Activated CD8-positive, alpha-beta T cell treated with anti-CD3 and anti-CD28 coated beads, Interleukin-2, amount 10 ng/mL, durations not matched to agents 7 days and 5 days (primary cell): ENCODE measurements at regions of chr19 and their contacts with region 1.

Region 1: GRCh38 chr19:18328340-18329034 is 5.6 kb upstream of the LSM4 start:
- DNase-seq: peak; percentile 95
- ATAC-seq: peak; percentile 100
- H3K4me3 Mint-ChIP-seq: peak overlapping the region; percentile 71
- H3K27ac Mint-ChIP-seq: peak overlapping the region; percentile 2
- H3K4me1 Mint-ChIP-seq: peaks cover 22% of the 10 kb centered on the region
- H3K27me3 Mint-ChIP-seq: no peaks in the 10 kb centered on the region

Region 2: DNA sequence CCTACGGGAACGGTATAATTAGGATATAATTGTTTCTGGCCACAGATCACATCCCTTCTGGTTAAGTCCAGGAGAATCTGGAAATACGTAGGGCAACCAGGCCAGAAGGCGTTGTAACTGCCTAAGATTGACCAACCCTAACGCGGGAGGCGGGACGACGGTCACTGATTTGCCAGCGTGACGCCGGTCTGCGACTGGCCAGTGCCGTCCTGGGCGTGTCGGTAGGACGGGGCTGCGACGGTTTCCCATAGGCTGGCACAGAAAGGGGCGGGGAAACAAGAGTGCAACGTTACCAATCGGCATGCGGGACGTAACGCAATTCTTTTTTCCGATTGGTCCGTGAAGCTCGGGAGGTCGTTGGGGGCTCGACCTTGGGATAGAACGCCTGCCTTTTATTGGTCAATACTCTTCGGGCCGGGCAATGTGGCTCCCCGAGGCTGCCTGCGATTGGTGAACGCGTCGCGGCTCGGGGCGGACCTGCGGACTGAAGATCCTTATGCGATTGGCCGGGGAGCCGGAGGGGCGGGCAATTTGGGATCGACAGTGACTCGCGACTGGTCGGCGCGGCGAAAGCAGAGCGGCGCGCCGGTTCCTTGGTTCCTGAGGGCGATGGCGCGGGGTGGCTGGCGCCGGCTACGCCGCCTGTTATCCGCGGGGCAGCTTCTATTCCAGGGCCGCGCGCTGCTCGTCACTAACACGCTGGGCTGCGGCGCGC is 135.7 kb before region 1 on chr19 and contains the start of gene MPV17L2:
- CTCF ChIA-PET with region 1: interaction called, 20 read pairs
- POLR2A ChIA-PET with region 1: no interaction called
- DNase-seq: peak; percentile 100
- ATAC-seq: peak; percentile 95
- H3K4me3 Mint-ChIP-seq: peak within 1 kb of the TSS; percentile 90
- H3K27ac Mint-ChIP-seq: peak within 1 kb of the TSS; percentile 93
- H3K4me1 Mint-ChIP-seq: peaks cover 26% of the 10 kb centered on the region
- H3K27me3 Mint-ChIP-seq: no peaks in the 10 kb centered on the region
- total RNA-seq, gene MPV17L2: 9.2 to 10.9 TPM

Region 3: DNA sequence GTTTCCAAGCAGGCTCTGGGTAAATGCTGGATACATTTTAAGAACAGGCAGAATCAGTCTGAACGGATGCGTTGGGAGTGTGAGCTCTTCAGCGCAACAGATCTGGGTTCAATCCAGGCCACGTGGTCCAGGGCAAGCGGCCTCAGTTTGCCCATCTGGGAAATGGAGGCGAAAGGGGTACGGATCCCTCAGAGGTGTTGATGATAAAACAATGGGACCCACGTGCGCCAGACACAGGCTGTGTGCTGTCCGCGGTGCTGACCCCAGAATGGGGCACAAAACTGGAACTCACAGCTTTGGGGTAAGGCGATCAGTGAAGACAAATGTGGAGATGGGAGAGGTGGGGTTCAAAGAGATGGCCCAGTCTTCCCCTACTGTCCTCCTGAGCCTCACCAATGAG is 89.2 kb before region 1 on chr19:
- CTCF ChIA-PET with region 1: interaction called, 11 read pairs
- POLR2A ChIA-PET with region 1: no interaction called
- DNase-seq: peak; percentile 45
- ATAC-seq: no peak
- H3K4me3 Mint-ChIP-seq: no peak overlapping the region
- H3K27ac Mint-ChIP-seq: no peak overlapping the region
- H3K4me1 Mint-ChIP-seq: no peaks in the 10 kb centered on the region
- H3K27me3 Mint-ChIP-seq: peaks cover 11% of the 10 kb centered on the region

Region 4: GRCh38 chr19:18274219-18274780 is 54.2 kb before region 1 on chr19 and contains the start of gene IQCN:
- CTCF ChIA-PET with region 1: interaction called, 455 read pairs
- POLR2A ChIA-PET with region 1: interaction called, 140 read pairs
- DNase-seq: peak; percentile 62
- ATAC-seq: peak; percentile 24
- H3K4me3 Mint-ChIP-seq: no peak within 1 kb of the TSS
- H3K27ac Mint-ChIP-seq: peak within 1 kb of the TSS; percentile 57
- H3K4me1 Mint-ChIP-seq: peaks cover 48% of the 10 kb centered on the region
- H3K27me3 Mint-ChIP-seq: no peaks in the 10 kb centered on the region
- total RNA-seq, gene IQCN: 3.7 to 4.2 TPM

Region 5: GRCh38 chr19:18340190-18340989 is 11.9 kb after region 1 on chr19 and contains the start of gene PGPEP1:
- CTCF ChIA-PET with region 1: interaction called, 46 read pairs
- POLR2A ChIA-PET with region 1: interaction called, 6 read pairs
- DNase-seq: peak; percentile 55
- ATAC-seq: peak; percentile 63
- H3K4me3 Mint-ChIP-seq: peak within 1 kb of the TSS; percentile 77
- H3K27ac Mint-ChIP-seq: peak within 1 kb of the TSS; percentile 81
- H3K4me1 Mint-ChIP-seq: peaks cover 21% of the 10 kb centered on the region
- H3K27me3 Mint-ChIP-seq: peaks cover 4% of the 10 kb centered on the region
- total RNA-seq, gene PGPEP1: 30.1 to 34.5 TPM

Region 6: GRCh38 chr19:18419195-18419698 is 90.8 kb after region 1 on chr19 and contains the start of gene SSBP4:
- CTCF ChIA-PET with region 1: interaction called, 34 read pairs
- POLR2A ChIA-PET with region 1: no interaction called
- DNase-seq: peak; percentile 76
- ATAC-seq: peak; percentile 42
- H3K4me3 Mint-ChIP-seq: peak within 1 kb of the TSS; percentile 93
- H3K27ac Mint-ChIP-seq: peak within 1 kb of the TSS; percentile 94
- H3K4me1 Mint-ChIP-seq: peaks cover 83% of the 10 kb centered on the region
- H3K27me3 Mint-ChIP-seq: no peaks in the 10 kb centered on the region
- total RNA-seq, gene SSBP4: 198 to 204 TPM